ENCODE measurements at regions of chr11 and their contacts with region 1.

Region 1: DNA sequence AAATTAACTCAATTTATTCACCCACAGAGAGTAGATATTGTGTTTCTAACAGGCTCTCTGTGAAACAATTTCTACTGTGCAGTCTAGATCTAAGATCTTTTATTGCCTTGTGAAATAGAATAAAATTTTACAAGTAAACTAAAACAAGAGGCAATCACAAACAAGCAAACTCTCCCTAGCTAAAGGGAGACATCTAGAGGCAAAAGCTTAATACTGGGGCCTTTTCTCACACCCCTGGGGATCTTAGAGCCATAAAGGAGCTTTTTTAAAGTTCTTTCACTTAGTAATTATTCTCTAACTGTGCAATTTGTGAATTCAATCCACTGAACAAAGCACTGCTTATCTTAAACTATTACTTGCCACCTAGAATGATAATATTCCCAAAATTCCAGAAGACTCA is 19.7 kb downstream of the ALG9 start:
- DNase-seq: no peak
- H3K4me3 ChIP-seq: no peak overlapping the region
- H3K27ac ChIP-seq: no peak overlapping the region
- H3K27me3 ChIP-seq: no peaks in the 10 kb centered on the region
- CTCF ChIP-seq: peak; percentile 66

Region 2: DNA sequence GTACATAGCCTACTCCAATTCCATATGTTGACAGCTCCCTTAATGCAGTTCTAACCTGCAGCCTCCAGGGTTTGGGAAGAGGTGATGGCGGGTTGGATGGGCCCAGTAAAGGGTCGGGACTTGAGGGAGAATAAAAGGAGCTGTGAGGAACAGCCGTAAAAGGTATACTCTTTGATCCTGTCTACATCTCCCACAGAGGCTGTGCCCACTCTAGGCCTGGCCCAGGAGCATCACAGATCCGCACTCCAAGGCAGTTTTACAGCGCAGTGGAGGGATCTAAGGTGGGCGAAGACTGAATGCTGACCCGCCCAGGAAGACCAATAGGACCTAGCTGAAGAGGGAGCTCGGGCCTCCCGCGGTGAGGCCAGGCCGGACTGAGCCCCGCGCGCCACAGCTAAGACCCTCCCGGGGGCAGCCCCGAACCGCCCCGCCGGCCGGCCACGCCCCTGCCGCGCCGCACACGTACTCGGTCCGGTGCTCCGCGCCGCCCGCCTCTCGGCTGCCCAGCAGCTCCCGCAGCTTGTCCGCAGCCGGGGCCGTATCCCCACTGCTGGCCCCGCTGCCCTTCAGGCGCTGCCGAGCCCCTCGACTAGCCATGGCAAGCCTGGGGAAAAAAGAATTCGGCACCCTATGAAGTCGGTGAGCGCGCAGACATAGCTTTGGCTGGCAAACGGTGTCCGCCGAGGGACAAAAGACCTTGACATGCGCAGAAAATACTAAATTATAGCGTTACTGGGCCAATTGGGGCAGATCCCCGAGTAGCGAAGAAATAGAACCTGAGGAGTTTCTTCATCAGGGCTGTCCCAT is 19.5 kb after region 1 on chr11 and contains the start of gene ALG9:
- CTCF ChIA-PET with region 1: interaction called, 12 read pairs
- POLR2A ChIA-PET with region 1: no interaction called
- DNase-seq: peak; percentile 61
- H3K4me3 ChIP-seq: peak within 1 kb of the TSS; percentile 80
- H3K27ac ChIP-seq: peak within 1 kb of the TSS; percentile 42
- H3K27me3 ChIP-seq: no peaks in the 10 kb centered on the region
- CTCF ChIP-seq: peak; percentile 52
- polyA plus RNA-seq, gene ALG9: 31.7 and 40.0 TPM in 2 replicates

Region 3: DNA sequence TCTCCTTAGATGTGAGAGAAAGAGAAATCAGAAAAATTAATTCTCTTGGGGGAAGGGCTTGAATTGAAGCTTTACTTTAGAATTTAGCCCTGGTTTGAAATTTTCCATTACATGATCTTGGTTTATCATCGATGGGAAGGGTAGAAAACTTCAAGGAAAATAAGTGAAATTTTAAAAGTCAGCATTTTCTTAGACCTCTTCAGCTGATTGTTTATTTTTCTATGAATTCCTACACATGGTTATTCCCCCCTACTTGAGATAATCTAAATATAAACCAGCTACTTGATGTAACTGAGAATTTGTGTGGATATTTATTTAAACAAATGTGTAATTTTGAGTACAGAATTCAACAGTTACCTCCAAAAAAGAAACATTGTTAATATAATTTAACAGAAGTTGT is 211.3 kb after region 1 on chr11:
- CTCF ChIA-PET with region 1: no interaction called
- POLR2A ChIA-PET with region 1: no interaction called
- DNase-seq: no peak
- H3K4me3 ChIP-seq: no peak overlapping the region
- H3K27ac ChIP-seq: no peak overlapping the region
- H3K27me3 ChIP-seq: no peaks in the 10 kb centered on the region
- CTCF ChIP-seq: no peak